Prostate gland (tissue), 2 donors: ENCODE measurements at regions of chr12 and their contacts with region 1.

Region 1: GRCh38 chr12:67441736-67442346 is 172.7 kb downstream of the CAND1 start:
- DNase-seq: peak; percentile 61
- H3K4me3 ChIP-seq: no peak overlapping the region
- H3K27ac ChIP-seq: no peak overlapping the region
- H3K4me1 ChIP-seq: no peaks in the 10 kb centered on the region
- H3K27me3 ChIP-seq: no peaks in the 10 kb centered on the region
- CTCF ChIP-seq: peak; percentile 30 to 72 (median 62)
- POLR2A ChIP-seq: no peak

Region 2: GRCh38 chr12:67182551-67182950 is 259.3 kb before region 1 on chr12:
- intact Hi-C with region 1: no loop called
- DNase-seq: no peak
- H3K4me3 ChIP-seq: no peak overlapping the region
- H3K27ac ChIP-seq: no peak overlapping the region
- H3K4me1 ChIP-seq: no peaks in the 10 kb centered on the region
- H3K27me3 ChIP-seq: no peaks in the 10 kb centered on the region
- CTCF ChIP-seq: no peak
- POLR2A ChIP-seq: no peak

Region 3: GRCh38 chr12:67355578-67356379 is 86.1 kb before region 1 on chr12:
- intact Hi-C with region 1: loop called (anchors 5 kb)
- DNase-seq: no peak
- H3K4me3 ChIP-seq: no peak overlapping the region
- H3K27ac ChIP-seq: no peak overlapping the region
- H3K4me1 ChIP-seq: no peaks in the 10 kb centered on the region
- H3K27me3 ChIP-seq: no peaks in the 10 kb centered on the region
- CTCF ChIP-seq: peak in 3 of 4 experiments; percentile 34 to 48 (median 34)
- POLR2A ChIP-seq: no peak